ENCODE measurements at regions of chr1 and their contacts with region 1.

Region 1: DNA sequence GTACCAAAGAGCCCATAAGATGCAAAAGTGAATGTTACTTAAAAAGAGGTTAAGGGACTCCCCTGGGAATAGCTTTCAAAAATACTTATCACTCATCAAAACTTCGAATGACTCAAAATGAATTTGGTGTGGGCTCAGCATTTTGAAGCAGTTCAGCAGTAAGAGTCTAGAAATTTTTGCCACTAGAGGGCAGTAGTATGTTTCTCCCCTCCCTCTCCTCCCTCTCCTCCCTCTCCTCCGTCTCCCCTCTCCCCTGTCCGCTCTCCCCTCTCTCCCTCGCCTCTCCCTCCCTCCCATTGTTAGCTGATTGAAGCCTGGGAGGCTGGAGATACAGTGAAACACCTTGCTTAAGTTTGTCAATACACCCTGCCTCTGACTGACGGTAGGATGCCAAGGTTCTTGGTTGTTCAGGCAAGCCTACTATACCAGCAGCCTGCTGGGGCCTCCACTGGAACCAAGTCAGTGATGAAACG is 70.8 kb upstream of the TENT5C start:
- DNase-seq: peak; percentile 50
- H3K4me3 Mint-ChIP-seq: no peak overlapping the region
- H3K27ac Mint-ChIP-seq: no peak overlapping the region
- H3K4me1 Mint-ChIP-seq: peaks cover 23% of the 10 kb centered on the region
- H3K27me3 Mint-ChIP-seq: no peaks in the 10 kb centered on the region

Region 2: DNA sequence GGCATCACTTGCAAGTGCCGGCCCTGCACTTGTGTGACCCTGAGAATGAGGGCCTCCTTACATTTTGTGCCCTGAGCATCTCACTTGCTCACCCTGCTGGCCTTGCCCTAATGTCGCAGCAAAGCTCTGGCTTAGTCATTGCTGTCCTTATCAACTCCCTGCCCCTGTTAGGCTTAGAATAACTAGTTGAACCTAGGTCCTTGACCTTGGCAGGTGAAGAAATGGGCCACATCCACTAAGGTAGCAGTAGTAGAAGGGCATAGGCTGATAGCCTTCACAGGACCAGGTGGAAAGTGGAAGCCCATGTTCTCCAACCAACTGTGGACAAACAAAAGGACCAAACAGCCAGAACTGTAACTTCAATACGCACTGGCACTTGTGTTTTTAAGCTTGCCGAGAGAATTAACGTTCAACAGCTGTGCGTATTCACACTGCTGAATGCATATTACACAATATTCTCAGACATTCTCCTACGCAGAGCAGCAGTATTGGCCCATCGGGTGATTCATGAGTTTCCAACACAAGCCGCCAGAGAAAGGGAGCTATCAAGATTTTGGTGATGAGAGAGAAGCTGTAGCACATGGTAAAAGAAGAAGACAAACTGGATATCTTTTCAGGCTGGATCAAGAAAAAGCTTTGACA is 653.0 kb before region 1 on chr1:
- CTCF ChIA-PET with region 1: no interaction called
- intact Hi-C with region 1: loop called (anchors 10 kb)
- DNase-seq: peak; percentile 77
- H3K4me3 Mint-ChIP-seq: no peak overlapping the region
- H3K27ac Mint-ChIP-seq: no peak overlapping the region
- H3K4me1 Mint-ChIP-seq: peaks cover 12% of the 10 kb centered on the region
- H3K27me3 Mint-ChIP-seq: no peaks in the 10 kb centered on the region

Region 3: DNA sequence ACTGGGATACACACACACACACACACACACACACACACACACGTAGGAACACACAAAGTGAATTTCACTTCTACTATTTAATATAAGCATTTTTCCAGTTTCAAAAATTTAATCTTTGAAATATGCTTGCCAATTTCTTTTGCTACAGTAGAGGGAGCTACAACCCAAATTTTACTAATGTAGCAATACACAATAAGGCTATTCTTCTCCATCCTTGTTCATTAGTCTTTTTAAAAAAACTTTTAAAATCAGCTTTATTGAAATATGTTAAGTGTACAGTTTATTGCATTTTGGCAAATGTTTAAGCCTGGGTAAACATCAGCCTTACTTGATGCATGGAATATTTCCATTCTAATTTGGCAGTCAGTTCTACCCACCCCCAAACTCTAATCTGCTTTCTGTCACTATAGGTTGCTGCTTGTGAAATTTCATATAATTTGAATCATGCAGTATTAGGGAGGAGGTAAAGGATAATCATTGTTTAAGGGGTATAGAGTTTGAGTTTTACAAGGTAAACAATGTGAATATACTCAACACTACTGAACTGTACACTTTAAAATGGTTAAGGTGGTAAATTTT is 22.2 kb before region 1 on chr1:
- CTCF ChIA-PET with region 1: interaction called, 48 read pairs
- intact Hi-C with region 1: loop called (anchors 1 kb)
- DNase-seq: no peak
- H3K4me3 Mint-ChIP-seq: no peak overlapping the region
- H3K27ac Mint-ChIP-seq: no peak overlapping the region
- H3K4me1 Mint-ChIP-seq: peaks cover 2% of the 10 kb centered on the region
- H3K27me3 Mint-ChIP-seq: no peaks in the 10 kb centered on the region

Region 4: DNA sequence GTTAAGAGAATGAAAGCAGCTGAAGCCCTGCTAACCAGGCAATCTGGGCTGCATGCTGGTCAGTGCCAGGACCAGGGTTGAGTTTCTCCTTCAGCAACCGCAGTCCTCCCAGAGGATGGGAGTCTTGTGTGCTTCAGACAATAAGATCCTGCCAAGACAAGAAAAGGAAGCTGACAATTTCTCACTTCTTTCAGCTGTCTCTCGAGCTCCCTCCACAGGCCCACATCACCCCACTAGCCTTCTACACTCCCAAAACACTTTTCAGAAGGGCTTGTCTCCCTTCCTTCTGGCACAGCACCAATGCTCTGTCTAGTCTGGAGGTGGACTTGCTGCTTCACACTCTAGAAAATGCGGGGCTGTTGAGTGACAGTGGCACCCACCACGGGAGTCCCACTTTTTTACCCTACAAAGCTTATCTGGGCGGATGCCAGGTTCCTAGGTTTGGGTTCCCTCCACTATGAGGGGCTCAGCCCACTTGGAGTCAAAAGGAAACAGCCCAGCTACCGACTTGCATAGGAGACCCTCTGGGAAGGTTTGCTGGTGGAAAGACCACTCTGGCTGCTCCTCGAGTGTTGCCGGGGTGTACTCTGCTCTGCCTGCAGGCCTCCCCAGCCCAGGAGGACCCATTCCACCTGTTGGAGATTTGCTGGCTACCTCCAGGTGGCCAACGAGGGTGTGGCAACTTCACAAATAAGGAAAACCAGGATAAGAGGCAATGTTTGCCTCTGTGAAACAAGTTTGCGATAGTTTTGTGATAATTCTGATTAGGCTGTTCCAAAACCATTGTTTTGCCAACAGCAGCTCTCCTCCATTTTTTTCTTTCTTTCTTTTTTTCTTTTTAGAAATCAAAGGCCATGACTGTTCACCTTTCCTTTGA is 139.7 kb after region 1 on chr1:
- CTCF ChIA-PET with region 1: interaction called, 41 read pairs
- intact Hi-C with region 1: loop called (anchors 1 kb)
- DNase-seq: peak; percentile 73
- H3K4me3 Mint-ChIP-seq: no peak overlapping the region
- H3K27ac Mint-ChIP-seq: peak overlapping the region; percentile 46
- H3K4me1 Mint-ChIP-seq: peaks cover 4% of the 10 kb centered on the region
- H3K27me3 Mint-ChIP-seq: peaks cover 11% of the 10 kb centered on the region

Region 5: GRCh38 chr1:117758444-117759316 is 223.6 kb after region 1 on chr1:
- CTCF ChIA-PET with region 1: interaction called, 244 read pairs
- intact Hi-C with region 1: loop called (anchors 1 kb)
- DNase-seq: peak; percentile 77
- H3K4me3 Mint-ChIP-seq: peak overlapping the region; percentile 63
- H3K27ac Mint-ChIP-seq: no peak overlapping the region
- H3K4me1 Mint-ChIP-seq: peaks cover 12% of the 10 kb centered on the region
- H3K27me3 Mint-ChIP-seq: peaks cover 10% of the 10 kb centered on the region

Region 6: DNA sequence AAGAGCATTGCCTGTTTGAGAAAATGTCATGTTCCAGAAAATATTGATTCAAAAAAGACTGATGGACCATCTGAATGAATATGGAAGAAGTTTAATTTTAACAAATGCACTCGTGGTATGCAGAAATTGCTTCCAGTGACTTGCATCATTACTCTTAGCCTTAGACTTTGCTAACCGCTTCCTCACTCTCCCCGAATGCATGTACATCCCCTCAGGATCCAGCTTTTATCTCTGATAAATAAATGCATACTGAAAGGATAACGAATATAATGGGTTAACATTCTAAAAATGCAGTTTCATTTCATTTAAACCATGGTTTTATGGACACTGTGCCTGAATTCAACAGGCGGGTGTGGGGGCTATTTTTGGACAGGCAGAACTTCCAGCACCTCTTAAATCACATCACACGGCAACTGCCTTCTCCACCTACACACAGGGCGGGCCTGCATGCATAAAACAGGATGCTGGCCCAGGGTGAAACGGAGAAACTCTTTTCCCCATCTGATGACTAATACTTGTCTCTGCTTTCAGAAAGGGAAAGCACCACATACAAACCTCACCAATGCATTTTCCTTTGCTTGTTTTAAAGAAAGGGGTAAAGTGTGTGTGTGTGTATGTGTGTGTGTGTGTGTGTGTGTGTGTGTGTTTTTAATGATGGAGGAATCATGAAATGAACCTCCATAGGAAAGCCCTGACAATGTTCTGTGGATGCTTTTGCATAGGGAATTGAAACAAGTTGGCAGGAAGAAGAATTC is 601.3 kb after region 1 on chr1:
- CTCF ChIA-PET with region 1: no interaction called
- intact Hi-C with region 1: loop called (anchors 5 kb)
- DNase-seq: peak; percentile 72
- H3K4me3 Mint-ChIP-seq: no peak overlapping the region
- H3K27ac Mint-ChIP-seq: no peak overlapping the region
- H3K4me1 Mint-ChIP-seq: peaks cover 9% of the 10 kb centered on the region
- H3K27me3 Mint-ChIP-seq: peaks cover 10% of the 10 kb centered on the region

Region 7: DNA sequence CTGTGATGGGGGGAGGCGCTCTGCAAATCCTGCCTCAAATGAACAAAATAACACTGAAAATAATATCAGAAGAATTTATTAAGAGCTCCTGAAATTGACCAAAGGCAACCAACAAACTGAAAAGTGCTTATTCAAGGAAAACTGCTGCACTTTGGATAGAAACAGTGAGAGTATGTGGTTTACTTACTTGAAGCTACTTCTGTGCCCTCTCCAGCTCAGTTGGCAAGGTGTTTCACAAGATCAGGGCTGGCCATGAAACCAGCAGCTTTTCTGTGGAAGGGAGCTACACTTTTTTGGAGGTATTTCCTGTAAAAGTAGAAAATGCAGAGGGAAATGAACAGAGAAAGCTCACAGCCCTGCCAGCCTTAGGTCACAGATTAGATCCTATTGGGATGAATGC is 960.0 kb after region 1 on chr1:
- CTCF ChIA-PET with region 1: no interaction called
- intact Hi-C with region 1: no loop called
- DNase-seq: no peak
- H3K4me3 Mint-ChIP-seq: no peak overlapping the region
- H3K27ac Mint-ChIP-seq: no peak overlapping the region
- H3K4me1 Mint-ChIP-seq: no peaks in the 10 kb centered on the region
- H3K27me3 Mint-ChIP-seq: no peaks in the 10 kb centered on the region